Endothelial cell of umbilical vein (primary cell): ENCODE measurements at regions of chr6 and their contacts with region 1.

Region 1: DNA sequence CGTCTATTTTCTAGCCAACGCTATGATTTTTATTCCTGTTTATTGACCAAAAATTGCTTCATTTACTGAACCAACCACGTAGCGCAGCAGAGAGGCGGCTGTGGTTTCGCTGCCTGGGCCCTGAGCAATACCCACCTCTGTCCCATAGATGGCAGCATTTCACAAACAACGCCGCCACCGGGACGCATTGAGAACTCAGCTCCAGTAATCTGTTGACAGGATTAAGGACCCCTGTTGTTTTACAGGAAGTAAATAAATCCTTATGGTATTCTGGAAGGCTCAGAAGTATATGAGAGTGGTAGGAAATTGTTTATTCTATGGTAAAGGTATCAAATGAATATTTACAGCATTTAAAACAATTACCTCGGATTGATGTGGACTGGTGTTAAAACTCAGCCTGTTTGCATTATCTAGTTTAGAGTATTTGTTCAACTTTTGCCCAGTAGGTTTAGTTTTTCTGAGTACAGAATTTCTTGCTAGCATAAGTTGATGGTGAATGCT is 547.9 kb upstream of the SLC35B3 start:
- DNase-seq: peak; percentile 58
- H3K4me3 ChIP-seq: no peak overlapping the region
- H3K27ac ChIP-seq: no peak overlapping the region
- H3K4me1 ChIP-seq: no peaks in the 10 kb centered on the region
- H3K27me3 ChIP-seq: no peaks in the 10 kb centered on the region
- CTCF ChIP-seq: peak; percentile 80 to 97
- POLR2A ChIP-seq: no peak

Region 2: DNA sequence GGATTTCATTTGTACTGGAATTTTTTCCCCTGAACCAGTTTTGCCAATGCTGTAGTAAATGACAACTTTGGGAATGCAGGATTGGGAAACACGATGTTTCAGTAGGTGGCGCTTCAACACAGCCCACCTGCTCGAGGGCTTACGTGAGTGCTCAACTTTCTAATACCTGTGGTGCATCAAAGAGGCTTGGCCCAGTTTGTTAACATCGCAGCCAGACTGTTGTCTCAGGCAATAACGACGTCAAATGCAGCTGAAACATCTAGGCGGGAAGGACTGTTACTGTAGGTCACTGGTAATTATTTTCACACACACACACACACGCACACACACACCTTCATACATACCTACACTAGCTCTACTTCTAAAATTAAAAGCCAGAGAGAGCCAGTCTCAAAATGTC is 267.6 kb after region 1 on chr6:
- CTCF ChIA-PET with region 1: no interaction called
- POLR2A ChIA-PET with region 1: no interaction called
- dilution Hi-C with region 1: no loop called
- intact Hi-C with region 1: loop called (anchors 10 kb)
- DNase-seq: peak; percentile 52
- H3K4me3 ChIP-seq: no peak overlapping the region
- H3K27ac ChIP-seq: no peak overlapping the region
- H3K4me1 ChIP-seq: no peaks in the 10 kb centered on the region
- H3K27me3 ChIP-seq: no peaks in the 10 kb centered on the region
- CTCF ChIP-seq: peak; percentile 32 to 41
- POLR2A ChIP-seq: no peak

Region 3: GRCh38 chr6:10414766-10415592 is 1431.7 kb after region 1 on chr6 and contains the start of gene TFAP2A:
- CTCF ChIA-PET with region 1: interaction called, 25 read pairs
- POLR2A ChIA-PET with region 1: no interaction called
- dilution Hi-C with region 1: no loop called
- intact Hi-C with region 1: no loop called
- DNase-seq: no peak
- H3K4me3 ChIP-seq: no peak within 1 kb of the TSS
- H3K27ac ChIP-seq: no peak within 1 kb of the TSS
- H3K4me1 ChIP-seq: peaks cover 9% of the 10 kb centered on the region
- H3K27me3 ChIP-seq: peaks cover 82 to 95% of the 10 kb centered on the region in 2 experiments
- CTCF ChIP-seq: no peak
- POLR2A ChIP-seq: no peak
- total RNA-seq, gene TFAP2A: not detected in 2 replicates

Region 4: GRCh38 chr6:10434692-10435376 is 1451.6 kb after region 1 on chr6:
- CTCF ChIA-PET with region 1: interaction called, 150 read pairs
- POLR2A ChIA-PET with region 1: no interaction called
- dilution Hi-C with region 1: no loop called
- intact Hi-C with region 1: loop called (anchors 1 kb)
- DNase-seq: no peak
- H3K4me3 ChIP-seq: no peak overlapping the region
- H3K27ac ChIP-seq: no peak overlapping the region
- H3K4me1 ChIP-seq: no peaks in the 10 kb centered on the region
- H3K27me3 ChIP-seq: peaks cover 0 to 2% of the 10 kb centered on the region in 2 experiments
- CTCF ChIP-seq: peak; percentile 43 to 44
- POLR2A ChIP-seq: no peak

Region 5: DNA sequence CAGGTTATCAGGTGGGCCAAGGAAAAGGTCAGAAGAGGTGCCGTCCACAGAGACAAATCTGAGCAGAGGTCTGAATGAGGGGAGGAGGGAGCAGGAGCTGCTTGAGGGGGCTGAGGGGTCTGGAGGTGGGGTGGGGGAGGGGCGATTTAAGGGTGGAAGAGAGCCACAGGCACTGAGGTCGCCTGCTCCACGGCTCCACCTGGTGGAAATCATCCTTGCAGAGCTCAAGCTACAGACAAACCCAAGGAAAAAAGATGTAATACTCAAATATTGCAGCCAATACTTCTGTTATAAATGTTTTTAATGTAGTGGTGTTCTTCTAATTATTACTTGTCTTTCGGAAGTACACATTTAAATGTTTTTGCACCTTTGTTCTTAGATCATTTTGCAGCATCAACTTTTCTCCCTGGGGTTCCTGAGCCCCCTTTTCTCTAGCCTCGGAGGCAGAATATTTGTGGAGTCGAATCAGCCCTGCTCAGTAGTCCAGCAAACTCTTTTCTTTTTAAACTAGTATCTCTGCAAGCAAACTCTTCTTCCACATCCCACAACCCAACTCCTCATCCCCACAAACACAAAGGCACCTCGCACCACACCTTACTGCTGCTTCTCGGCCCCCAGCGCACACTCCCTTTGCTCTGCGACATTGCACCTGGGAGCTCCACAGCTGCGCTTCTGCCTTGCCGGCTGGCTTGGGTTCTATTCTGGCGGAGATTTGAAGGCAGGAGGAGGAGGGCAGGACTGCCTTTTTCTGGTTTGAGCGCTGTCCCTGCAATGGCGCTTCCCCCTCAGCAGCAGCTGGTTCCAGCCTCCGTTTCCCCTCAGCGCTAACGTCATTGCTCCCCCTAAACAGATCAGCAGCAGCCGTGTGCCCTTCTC is 1482.6 kb after region 1 on chr6:
- CTCF ChIA-PET with region 1: interaction called, 16 read pairs
- POLR2A ChIA-PET with region 1: no interaction called
- dilution Hi-C with region 1: no loop called
- intact Hi-C with region 1: no loop called
- DNase-seq: peak; percentile 39
- H3K4me3 ChIP-seq: no peak overlapping the region
- H3K27ac ChIP-seq: no peak overlapping the region
- H3K4me1 ChIP-seq: no peaks in the 10 kb centered on the region
- H3K27me3 ChIP-seq: no peaks in the 10 kb centered on the region
- CTCF ChIP-seq: peak; percentile 11 to 62
- POLR2A ChIP-seq: no peak